Activated CD4-positive, alpha-beta memory T cell treated with anti-CD3 and anti-CD28 coated beads for 36 hours (primary cell): ENCODE measurements at regions of chr16 and their contacts with region 1.

Region 1: DNA sequence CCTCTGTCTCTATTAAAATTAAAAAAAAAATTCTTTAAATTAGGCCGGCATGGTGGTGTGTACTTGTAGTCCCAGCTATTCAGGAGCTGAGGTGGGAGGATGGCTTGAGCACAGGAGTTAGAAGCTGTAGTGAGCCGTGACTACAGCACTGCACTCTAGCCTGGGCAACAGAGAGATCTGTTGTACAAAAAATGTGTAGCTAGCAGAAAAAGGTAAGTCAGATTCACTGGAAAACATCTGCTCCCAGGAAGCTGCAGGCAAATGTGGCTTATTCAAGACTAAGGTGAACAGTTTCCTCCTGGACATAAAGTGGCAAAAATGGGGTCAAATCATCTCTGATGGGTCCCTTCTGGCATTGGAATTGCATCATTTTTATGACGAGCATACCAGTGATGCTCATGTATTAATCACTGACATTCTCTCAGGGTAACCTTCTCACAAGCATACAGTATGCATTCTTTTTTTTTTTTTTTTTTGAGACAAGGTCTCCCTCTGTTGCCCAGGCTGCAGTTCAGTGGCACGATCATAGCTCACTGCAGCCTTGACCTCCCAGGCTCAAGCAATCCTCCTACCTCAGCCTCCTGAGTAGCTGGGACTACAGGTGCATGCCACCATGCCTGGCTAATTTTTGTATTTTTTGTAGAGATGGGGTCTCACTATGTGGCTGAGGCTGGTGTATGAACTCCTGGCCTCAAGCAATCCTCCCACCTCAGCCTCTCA is 48.7 kb downstream of the CPPED1 start:
- DNase-seq: no peak
- H3K4me3 Mint-ChIP-seq: no peak overlapping the region
- H3K27ac Mint-ChIP-seq: no peak overlapping the region
- H3K4me1 Mint-ChIP-seq: peaks cover 33% of the 10 kb centered on the region
- H3K27me3 Mint-ChIP-seq: no peaks in the 10 kb centered on the region

Region 2: DNA sequence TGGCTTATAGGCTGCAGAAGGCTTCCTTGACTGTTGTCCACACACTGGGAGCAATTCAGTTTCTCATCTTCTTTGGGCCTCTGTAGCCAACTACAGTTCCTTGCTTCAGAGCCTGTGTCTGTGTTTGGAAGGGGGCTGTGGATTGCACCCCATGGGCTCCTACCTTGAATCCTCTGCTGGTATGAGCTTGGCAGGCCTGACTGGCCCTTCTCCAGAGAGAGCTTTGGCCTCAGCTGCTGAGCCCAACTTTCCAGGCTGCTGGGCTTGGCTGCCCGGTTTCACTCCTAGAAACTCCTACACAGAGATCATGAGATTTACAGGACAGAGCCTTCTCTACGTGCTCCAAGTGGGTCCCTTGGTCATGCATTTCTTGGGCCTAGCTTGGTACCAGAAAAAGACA is 424.0 kb before region 1 on chr16:
- CTCF ChIA-PET with region 1: no interaction called
- POLR2A ChIA-PET with region 1: no interaction called
- intact Hi-C with region 1: no loop called
- DNase-seq: no peak
- H3K4me3 Mint-ChIP-seq: no peak overlapping the region
- H3K27ac Mint-ChIP-seq: no peak overlapping the region
- H3K4me1 Mint-ChIP-seq: no peaks in the 10 kb centered on the region
- H3K27me3 Mint-ChIP-seq: no peaks in the 10 kb centered on the region

Region 3: GRCh38 chr16:12613131-12613991 is 141.6 kb before region 1 on chr16:
- CTCF ChIA-PET with region 1: no interaction called
- POLR2A ChIA-PET with region 1: no interaction called
- intact Hi-C with region 1: loop called (anchors 1 kb)
- DNase-seq: peak; percentile 75
- H3K4me3 Mint-ChIP-seq: no peak overlapping the region
- H3K27ac Mint-ChIP-seq: peak overlapping the region; percentile 67
- H3K4me1 Mint-ChIP-seq: peaks cover 38% of the 10 kb centered on the region
- H3K27me3 Mint-ChIP-seq: peaks cover 13% of the 10 kb centered on the region

Region 4: DNA sequence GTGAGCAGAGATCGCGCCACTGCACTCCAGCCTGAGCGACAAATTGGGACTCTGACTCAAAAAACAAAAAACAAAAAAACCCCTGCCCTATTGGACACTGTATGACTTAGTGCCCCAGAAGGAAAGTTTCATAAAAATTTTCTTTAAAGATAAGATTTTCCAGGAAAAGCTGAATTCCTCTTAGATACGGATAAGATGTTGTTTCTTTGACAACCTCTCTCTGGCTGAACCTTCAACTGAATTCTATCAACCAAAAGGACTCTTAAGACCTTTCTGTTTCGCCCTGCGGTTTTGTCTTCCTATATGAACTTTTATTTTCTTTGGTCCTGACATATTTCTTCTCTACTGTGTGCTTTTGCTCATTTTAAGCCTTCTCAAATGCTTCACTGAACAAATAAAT is 12.9 kb after region 1 on chr16:
- CTCF ChIA-PET with region 1: no interaction called
- POLR2A ChIA-PET with region 1: interaction called, 4 read pairs
- intact Hi-C with region 1: loop called (anchors 1 kb)
- DNase-seq: no peak
- H3K4me3 Mint-ChIP-seq: no peak overlapping the region
- H3K27ac Mint-ChIP-seq: peak overlapping the region; percentile 11
- H3K4me1 Mint-ChIP-seq: peaks cover 17% of the 10 kb centered on the region
- H3K27me3 Mint-ChIP-seq: no peaks in the 10 kb centered on the region

Region 5: DNA sequence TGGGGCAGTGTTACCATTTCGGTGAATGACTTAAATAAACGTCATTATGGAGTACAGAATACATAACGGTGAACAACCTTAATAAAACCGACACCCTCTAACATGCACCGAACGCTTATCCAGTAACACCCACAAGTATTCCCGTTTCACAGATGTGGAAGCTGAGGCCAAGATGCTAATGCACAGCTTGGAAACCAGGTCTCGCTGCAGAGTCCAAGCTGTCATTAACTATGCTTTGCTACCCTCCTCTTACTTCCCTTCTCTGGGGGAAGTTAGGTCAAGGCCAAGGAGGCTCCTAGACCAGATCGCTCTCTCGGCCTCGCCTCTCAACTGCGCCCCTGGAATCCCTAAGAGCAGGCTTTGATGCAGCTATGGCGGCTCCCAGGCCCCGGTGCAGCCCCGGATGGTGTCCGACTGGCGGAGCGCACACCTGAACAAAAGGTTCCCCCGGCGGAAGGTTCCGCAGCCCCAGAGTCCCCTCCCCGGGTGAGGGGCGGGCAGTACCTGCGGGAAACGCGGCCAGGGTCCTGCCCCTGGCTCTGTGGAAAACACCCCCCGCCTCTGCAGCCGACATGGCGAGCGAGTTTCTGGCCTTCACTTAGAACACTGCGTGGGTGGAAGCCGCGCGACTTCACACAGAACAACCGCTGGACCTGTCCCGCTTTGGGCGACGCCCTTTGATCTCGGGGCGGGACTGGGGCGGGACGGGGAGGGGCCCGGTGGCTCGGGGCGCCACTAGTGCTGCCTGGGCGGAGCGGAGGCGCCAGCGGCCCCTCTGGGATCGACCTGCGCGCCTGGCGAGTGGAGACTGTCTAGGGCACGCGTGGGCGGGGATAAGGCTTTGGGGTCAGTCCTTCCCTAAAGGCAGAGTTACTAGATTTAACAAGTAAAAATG is 48.5 kb after region 1 on chr16 and contains the start of gene CPPED1:
- CTCF ChIA-PET with region 1: no interaction called
- POLR2A ChIA-PET with region 1: interaction called, 3 read pairs
- intact Hi-C with region 1: loop called (anchors 1 kb)
- DNase-seq: peak; percentile 94
- H3K4me3 Mint-ChIP-seq: peak within 1 kb of the TSS; percentile 95
- H3K27ac Mint-ChIP-seq: peak within 1 kb of the TSS; percentile 91
- H3K4me1 Mint-ChIP-seq: peaks cover 30% of the 10 kb centered on the region
- H3K27me3 Mint-ChIP-seq: peaks cover 2% of the 10 kb centered on the region
- total RNA-seq, gene CPPED1: 11.0 to 11.5 TPM